Caco-2 (cell line): ENCODE measurements at regions of chr13 and their contacts with region 1.

Region 1: DNA sequence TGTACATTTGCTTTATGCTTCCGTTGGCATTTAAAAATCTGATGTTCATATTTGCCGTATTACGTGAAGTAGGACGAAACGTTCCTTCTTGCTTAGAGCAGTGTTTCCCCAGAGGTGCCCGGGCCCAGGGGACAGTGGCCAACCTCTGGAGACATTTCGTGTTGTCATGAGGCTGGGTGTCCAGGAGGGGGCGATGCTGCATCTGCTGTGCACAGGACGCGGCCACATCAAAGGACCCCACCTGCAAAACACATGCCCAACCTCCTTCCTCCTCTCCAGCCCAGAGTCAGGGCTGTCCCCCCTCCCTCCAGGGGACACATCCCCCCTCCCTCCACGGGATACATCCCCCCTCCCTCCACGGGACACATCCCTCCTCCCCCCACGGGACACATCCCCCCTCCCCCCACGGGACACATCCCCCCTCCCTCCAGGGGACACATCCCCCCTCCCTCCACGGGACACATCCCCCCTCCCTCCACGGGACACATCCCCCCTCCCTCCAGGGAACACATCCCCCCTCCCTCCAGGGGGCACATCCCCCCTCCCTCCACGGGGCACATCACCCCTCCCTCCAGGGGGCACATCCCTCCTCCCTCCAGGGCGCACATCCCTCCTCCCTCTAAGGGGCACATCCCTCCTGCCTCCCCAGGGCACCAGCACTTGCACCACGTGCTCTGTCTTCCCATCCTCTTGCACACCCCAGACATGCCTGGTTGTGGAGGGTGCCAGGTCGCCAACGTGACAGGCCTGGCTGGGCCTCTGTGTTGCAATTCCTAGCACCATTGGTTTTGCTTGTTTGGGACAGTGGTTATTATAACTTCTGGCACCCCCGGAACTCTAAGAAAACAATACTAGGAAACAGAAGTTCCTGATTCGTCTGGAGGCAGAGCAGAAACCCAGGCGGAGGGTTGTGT is 46.7 kb downstream of the GAS6 start:
- DNase-seq: peak; percentile 90 to 92
- H3K4me3 ChIP-seq: no peak overlapping the region
- H3K4me3 Mint-ChIP-seq: peak overlapping the region; percentile 49
- H3K27ac Mint-ChIP-seq: no peak overlapping the region
- H3K4me1 ChIP-seq: peaks cover 6% of the 10 kb centered on the region; the same call in 1 of the 2 replicates
- H3K4me1 Mint-ChIP-seq: no peaks in the 10 kb centered on the region
- H3K27me3 ChIP-seq: no peaks in the 10 kb centered on the region
- H3K27me3 Mint-ChIP-seq: no peaks in the 10 kb centered on the region
- CTCF ChIP-seq: peak; percentile 86 to 94

Region 2: DNA sequence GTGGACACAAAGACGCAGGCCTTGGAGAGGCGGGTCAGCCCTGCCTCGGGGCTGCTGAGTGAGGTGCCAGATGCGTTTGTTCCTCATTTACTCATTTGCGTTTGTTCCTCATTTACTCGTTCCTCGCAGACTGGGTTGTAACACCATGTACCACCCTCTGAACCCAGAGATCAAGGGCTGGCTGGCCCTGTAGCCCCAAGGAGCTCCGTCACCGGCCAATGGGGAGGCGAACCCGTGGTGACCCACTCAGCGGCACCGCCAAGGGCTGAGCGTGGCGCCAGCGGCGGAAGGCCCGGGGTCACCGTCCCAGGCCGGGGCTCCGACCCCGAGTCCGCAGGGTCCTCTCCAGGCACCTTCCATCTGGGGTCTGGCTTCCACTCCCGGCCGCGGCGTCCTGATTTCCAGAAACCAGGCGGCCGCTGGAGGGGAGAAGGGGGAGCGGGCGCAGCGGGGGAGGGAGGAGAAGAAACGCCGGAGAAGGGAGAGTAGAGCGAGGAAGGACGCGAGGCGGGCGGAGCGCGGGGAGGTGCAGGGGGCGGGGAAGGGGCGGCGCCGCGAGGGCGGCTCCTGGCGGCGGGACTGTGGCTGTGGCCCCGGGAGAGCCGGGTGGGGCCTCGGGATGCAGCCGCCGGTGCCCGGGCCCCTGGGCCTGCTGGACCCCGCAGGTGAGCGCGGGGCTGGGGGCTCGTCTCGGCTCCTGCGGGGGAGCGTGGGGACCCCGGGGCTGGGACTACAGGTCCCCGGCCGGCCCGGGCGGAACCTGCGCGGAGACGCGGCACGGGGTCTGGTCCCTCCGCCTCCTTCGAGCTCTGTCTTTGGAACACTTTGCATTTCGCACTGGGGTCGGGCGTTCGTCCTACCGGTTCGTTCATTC is 58.3 kb before region 1 on chr13 and contains the start of gene TMEM255B:
- CTCF ChIA-PET with region 1: no interaction called
- POLR2A ChIA-PET with region 1: no interaction called
- intact Hi-C with region 1: no loop called
- DNase-seq: peak; percentile 81 to 84
- H3K4me3 ChIP-seq: peak within 1 kb of the TSS; percentile 57
- H3K4me3 Mint-ChIP-seq: peak within 1 kb of the TSS; percentile 90
- H3K27ac Mint-ChIP-seq: no peak within 1 kb of the TSS
- H3K4me1 ChIP-seq: 0 out of 2 replicates have a peak, but pooled peaks cover 4% of the 10 kb centered on the region
- H3K4me1 Mint-ChIP-seq: peaks cover 20% of the 10 kb centered on the region
- H3K27me3 ChIP-seq: no peaks in the 10 kb centered on the region; the same call in 1 of the 2 replicates
- H3K27me3 Mint-ChIP-seq: peaks cover 25% of the 10 kb centered on the region
- CTCF ChIP-seq: peak; percentile 21 to 24
- total RNA-seq, gene TMEM255B: 0.67 and 0.82 TPM in 2 replicates

Region 3: DNA sequence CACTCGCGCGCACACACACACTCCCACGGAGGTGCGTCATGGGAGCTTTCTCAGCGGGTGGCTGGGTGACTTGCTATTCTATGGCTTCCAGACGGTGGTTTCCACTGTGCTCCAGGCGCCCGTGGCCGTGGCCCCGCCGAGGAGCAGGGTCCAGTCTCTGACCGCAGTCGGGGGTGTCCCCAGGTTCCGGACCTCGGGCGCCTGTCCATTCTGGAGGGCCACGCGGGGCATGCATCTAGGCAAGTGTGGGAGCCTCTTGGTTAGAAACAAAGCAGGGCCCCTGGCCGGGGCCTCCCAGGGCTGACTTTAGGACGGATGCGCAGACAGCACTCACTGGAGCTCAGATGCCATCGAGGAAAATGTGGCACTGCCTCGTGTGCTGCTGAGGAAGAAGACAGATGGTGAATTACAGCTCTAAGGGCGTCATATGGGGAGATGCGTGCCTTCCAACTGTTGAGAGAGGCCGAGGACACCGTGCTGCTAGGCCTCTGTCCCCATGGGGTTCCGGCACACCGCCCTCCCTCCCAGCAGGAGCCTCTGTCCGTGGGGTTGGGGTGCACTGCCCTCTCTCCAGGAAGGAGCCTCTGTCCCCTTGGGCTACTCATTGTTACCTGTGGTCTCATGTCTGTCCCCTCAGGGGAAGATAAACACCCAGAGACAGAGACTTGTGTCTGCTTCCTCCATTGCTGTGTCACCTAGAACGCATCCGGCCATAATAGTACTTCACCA is 20.1 kb before region 1 on chr13:
- CTCF ChIA-PET with region 1: no interaction called
- POLR2A ChIA-PET with region 1: no interaction called
- intact Hi-C with region 1: no loop called
- DNase-seq: peak in 1 of 2 experiments; percentile 21
- H3K4me3 ChIP-seq: no peak overlapping the region
- H3K4me3 Mint-ChIP-seq: no peak overlapping the region
- H3K27ac Mint-ChIP-seq: no peak overlapping the region
- H3K4me1 ChIP-seq: peaks cover 15% of the 10 kb centered on the region; the same call in 1 of the 2 replicates
- H3K4me1 Mint-ChIP-seq: no peaks in the 10 kb centered on the region
- H3K27me3 ChIP-seq: no peaks in the 10 kb centered on the region
- H3K27me3 Mint-ChIP-seq: no peaks in the 10 kb centered on the region
- CTCF ChIP-seq: no peak

Region 4: GRCh38 chr13:113863436-113864272 is 46.5 kb after region 1 on chr13 and contains the start of gene GAS6:
- CTCF ChIA-PET with region 1: no interaction called
- POLR2A ChIA-PET with region 1: no interaction called
- intact Hi-C with region 1: loop called (anchors 1 kb)
- DNase-seq: peak; percentile 64 to 77
- H3K4me3 ChIP-seq: peak within 1 kb of the TSS; percentile 71
- H3K4me3 Mint-ChIP-seq: peak within 1 kb of the TSS; percentile 77
- H3K27ac Mint-ChIP-seq: peak within 1 kb of the TSS; percentile 67
- H3K4me1 ChIP-seq: peaks cover 44% of the 10 kb centered on the region
- H3K4me1 Mint-ChIP-seq: peaks cover 27% of the 10 kb centered on the region
- H3K27me3 ChIP-seq: no peaks in the 10 kb centered on the region
- H3K27me3 Mint-ChIP-seq: no peaks in the 10 kb centered on the region
- CTCF ChIP-seq: peak in 1 of 2 experiments; percentile 50
- total RNA-seq, gene GAS6: 29.9 and 34.8 TPM in 2 replicates

Region 5: GRCh38 chr13:113904411-113904810 is 87.2 kb after region 1 on chr13:
- CTCF ChIA-PET with region 1: no interaction called
- POLR2A ChIA-PET with region 1: no interaction called
- intact Hi-C with region 1: loop called (anchors 2 kb)
- DNase-seq: peak in 1 of 2 experiments; percentile 49
- H3K4me3 ChIP-seq: no peak overlapping the region
- H3K4me3 Mint-ChIP-seq: no peak overlapping the region
- H3K27ac Mint-ChIP-seq: no peak overlapping the region
- H3K4me1 ChIP-seq: no peaks in the 10 kb centered on the region
- H3K4me1 Mint-ChIP-seq: no peaks in the 10 kb centered on the region
- H3K27me3 ChIP-seq: no peaks in the 10 kb centered on the region
- H3K27me3 Mint-ChIP-seq: peaks cover 5% of the 10 kb centered on the region
- CTCF ChIP-seq: peak; percentile 34 to 58

Region 6: DNA sequence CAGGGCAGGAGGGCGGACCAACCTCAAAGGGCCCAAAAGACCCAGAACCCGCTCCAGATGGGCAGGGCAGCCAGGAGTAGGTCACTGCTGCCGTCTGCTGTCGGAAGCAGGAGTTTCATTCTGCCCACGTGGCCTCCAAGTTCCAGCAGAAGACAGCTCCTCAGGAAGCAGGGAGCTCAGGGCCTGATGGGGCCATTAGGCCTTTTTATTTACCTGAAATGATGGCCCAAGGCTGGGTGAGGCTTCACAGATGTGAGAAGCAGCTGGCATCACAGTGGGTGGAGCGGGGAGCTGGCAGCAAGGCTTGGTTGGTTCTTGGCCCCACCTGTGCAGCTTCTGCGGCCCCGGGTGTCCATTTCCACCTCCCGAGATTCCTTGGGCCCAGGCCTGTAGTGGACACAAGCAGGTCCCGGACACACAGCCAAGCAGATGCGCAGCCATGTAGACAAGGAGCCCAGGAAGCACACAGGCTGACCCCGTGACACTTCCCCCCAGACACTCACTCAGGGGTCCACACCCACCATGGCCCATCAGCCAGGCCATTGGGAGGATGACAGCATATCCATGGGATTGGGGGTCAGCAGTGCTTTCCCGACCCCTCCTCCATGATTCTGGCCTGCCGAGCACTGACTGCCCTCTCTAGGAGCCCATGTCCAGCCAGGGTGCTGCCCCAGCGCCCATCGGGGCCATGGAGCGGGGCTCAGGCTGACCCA is 130.3 kb after region 1 on chr13:
- CTCF ChIA-PET with region 1: interaction called, 3 read pairs
- POLR2A ChIA-PET with region 1: no interaction called
- intact Hi-C with region 1: loop called (anchors 2 kb)
- DNase-seq: peak in 1 of 2 experiments; percentile 19
- H3K4me3 ChIP-seq: no peak overlapping the region
- H3K4me3 Mint-ChIP-seq: no peak overlapping the region
- H3K27ac Mint-ChIP-seq: no peak overlapping the region
- H3K4me1 ChIP-seq: peaks cover 8% of the 10 kb centered on the region; the same call in 1 of the 2 replicates
- H3K4me1 Mint-ChIP-seq: no peaks in the 10 kb centered on the region
- H3K27me3 ChIP-seq: no peaks in the 10 kb centered on the region
- H3K27me3 Mint-ChIP-seq: no peaks in the 10 kb centered on the region
- CTCF ChIP-seq: peak; percentile 18 to 40

Region 7: DNA sequence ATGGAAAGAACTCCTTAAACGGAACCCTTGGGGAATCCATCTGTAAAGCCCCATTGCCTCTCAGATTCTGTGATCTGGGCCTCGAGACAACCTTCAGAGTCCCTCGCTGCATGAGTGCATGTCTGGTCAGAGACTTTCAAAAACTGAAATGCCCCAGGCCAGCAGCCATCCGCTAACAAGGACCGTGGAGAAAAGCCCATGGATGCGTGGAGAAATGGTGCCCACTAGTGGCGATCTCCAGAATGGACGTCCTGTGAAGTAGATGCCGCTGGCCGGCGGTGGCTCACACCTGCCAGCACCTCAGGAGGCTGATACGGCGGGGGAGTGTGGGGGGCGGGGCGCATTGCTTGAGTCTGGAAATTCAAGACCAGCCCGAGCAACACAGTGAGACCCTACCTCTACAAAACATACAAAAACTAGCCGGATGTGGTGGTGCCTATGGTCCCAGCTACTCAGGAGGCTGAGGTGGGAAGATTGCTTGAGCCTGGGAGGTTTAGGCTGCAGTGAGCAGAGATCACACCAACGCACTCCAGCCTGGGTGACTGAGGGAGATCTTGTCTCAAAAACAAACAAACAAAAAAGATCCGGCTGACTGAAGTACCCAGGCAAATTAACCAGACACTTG is 409.6 kb after region 1 on chr13:
- CTCF ChIA-PET with region 1: no interaction called
- POLR2A ChIA-PET with region 1: no interaction called
- intact Hi-C with region 1: loop called (anchors 1 kb)
- DNase-seq: peak; percentile 88 to 90
- H3K4me3 ChIP-seq: no peak overlapping the region
- H3K4me3 Mint-ChIP-seq: no peak overlapping the region
- H3K27ac Mint-ChIP-seq: no peak overlapping the region
- H3K4me1 ChIP-seq: no peaks in the 10 kb centered on the region
- H3K4me1 Mint-ChIP-seq: peaks cover 16% of the 10 kb centered on the region
- H3K27me3 ChIP-seq: no peaks in the 10 kb centered on the region
- H3K27me3 Mint-ChIP-seq: peaks cover 3% of the 10 kb centered on the region
- CTCF ChIP-seq: peak; percentile 86 to 97